PC-9 (cell line): ENCODE measurements at regions of chr11 and their contacts with region 1.

Region 1: DNA sequence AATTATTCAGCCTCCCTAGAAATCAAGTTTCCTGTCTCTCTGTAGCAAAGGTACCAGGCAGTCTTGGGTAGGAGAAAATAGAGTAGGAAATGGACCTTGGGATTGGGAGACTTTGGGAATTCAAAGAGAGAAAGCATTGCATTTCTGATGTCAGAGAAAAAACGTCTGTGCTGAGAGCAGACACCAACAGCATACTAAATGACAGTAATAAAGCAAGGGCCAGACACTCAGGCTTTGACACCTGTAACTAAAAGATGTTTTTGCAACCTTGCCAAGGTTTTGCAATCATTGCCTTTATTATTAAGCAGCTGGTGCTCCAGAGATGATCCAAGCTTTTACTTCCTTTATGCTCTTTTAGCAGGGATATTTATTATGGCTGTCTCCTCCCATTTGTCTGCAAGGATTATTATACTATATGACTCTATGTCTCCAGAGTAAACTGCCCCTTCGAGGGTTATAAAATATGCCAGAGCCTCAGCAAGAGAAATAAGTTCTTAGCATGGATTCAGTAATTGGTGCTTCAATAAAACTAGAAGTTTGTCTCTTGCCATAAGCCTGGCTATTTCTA is 85.2 kb upstream of the GRAMD1B start:
- DNase-seq: no peak
- H3K4me3 ChIP-seq: no peak overlapping the region
- H3K27ac ChIP-seq: no peak overlapping the region
- H3K4me1 ChIP-seq: no peaks in the 10 kb centered on the region
- H3K27me3 ChIP-seq: no peaks in the 10 kb centered on the region; the same call in 1 of the 2 replicates
- CTCF ChIP-seq: no peak

Region 2: DNA sequence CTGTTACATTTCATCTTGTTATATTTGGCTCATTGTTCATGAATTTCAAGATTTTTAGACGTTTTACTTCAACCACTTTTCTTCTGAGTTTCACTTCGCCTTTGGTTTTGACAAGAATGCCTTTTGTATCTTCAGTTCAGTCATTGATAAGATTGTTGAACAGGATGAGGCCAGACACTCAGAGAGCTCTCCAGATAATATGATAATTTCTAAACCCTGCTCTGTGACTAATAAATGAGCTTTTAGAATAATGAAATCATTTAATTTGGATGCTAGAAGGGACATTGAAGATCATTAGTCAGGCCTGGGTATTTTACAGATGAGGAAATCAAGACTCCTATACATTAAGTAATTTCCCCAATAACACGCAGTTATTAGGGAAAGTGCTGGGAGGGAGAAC is 48.0 kb after region 1 on chr11:
- CTCF ChIA-PET with region 1: interaction called, 10 read pairs
- POLR2A ChIA-PET with region 1: no interaction called
- intact Hi-C with region 1: no loop called
- DNase-seq: no peak
- H3K4me3 ChIP-seq: no peak overlapping the region
- H3K27ac ChIP-seq: no peak overlapping the region
- H3K4me1 ChIP-seq: no peaks in the 10 kb centered on the region
- H3K27me3 ChIP-seq: no peaks in the 10 kb centered on the region
- CTCF ChIP-seq: no peak

Region 3: DNA sequence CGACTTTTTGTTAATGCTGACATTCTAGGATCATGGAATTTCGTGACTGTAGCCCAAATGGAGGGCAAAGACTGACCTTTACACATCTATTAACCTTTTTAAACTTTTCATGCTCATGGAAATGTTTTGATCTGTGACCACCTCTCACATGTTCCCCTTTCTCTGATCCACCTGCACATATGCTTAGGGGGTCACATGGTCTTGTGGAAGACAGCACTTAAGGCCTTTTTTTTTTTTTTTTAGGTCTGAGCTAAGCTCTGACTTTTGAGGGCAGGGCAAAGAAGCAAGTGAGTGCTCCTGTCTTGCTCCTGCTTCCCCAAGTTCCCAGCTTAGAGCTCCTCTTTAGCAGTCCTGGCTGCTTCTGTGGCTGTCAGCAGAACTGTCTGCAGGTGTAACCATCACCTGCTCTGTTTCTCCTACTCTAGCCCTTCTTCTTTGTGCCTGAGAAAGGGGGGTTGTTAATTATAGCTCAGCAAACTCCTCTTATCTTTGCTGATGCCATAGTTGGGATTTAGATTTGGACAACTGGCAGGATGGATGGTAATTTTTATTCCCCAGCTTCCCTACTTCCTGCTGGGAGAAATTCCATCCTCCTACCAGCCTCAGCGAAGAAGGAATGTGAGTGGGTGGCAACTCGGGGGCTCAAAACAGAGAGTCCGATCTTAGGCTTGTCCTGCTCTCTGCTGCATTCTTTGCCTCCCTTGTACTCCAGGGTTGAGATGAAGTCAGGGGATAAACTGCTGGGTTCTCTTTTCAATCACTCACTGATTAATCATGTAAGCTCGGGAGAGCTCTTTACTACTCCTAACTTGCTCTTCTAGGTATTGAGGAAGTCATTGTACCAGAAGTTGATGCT is 149.5 kb after region 1 on chr11:
- CTCF ChIA-PET with region 1: no interaction called
- POLR2A ChIA-PET with region 1: no interaction called
- intact Hi-C with region 1: no loop called
- DNase-seq: no peak
- H3K4me3 ChIP-seq: no peak overlapping the region
- H3K27ac ChIP-seq: no peak overlapping the region
- H3K4me1 ChIP-seq: peaks cover 10% of the 10 kb centered on the region
- H3K27me3 ChIP-seq: no peaks in the 10 kb centered on the region
- CTCF ChIP-seq: no peak